ENCODE measurements at regions of chr14 and their contacts with region 1.

Region 1: GRCh38 chr14:23095196-23096108 is at the start of gene C14orf119:
- DNase-seq: peak; percentile 100
- ATAC-seq: peak; percentile 93
- H3K4me3 Mint-ChIP-seq: no peak within 1 kb of the TSS
- H3K27ac Mint-ChIP-seq: no peak within 1 kb of the TSS
- H3K4me1 Mint-ChIP-seq: peaks cover 19% of the 10 kb centered on the region
- H3K27me3 Mint-ChIP-seq: no peaks in the 10 kb centered on the region
- total RNA-seq, gene C14orf119: 43.8 to 51.5 TPM

Region 2: GRCh38 chr14:22589096-22589839 is 506.2 kb before region 1 on chr14 and contains the start of gene DAD1:
- CTCF ChIA-PET with region 1: no interaction called
- POLR2A ChIA-PET with region 1: interaction called, 10 read pairs
- intact Hi-C with region 1: loop called in 1 of 2 experiments (anchors 1 kb)
- DNase-seq: peak; percentile 100
- ATAC-seq: peak; percentile 84
- H3K4me3 Mint-ChIP-seq: peak within 1 kb of the TSS; percentile 93
- H3K27ac Mint-ChIP-seq: peak within 1 kb of the TSS; percentile 97
- H3K4me1 Mint-ChIP-seq: peaks cover 72% of the 10 kb centered on the region
- H3K27me3 Mint-ChIP-seq: peaks cover 1% of the 10 kb centered on the region
- total RNA-seq, gene DAD1: 265 to 302 TPM

Region 3: DNA sequence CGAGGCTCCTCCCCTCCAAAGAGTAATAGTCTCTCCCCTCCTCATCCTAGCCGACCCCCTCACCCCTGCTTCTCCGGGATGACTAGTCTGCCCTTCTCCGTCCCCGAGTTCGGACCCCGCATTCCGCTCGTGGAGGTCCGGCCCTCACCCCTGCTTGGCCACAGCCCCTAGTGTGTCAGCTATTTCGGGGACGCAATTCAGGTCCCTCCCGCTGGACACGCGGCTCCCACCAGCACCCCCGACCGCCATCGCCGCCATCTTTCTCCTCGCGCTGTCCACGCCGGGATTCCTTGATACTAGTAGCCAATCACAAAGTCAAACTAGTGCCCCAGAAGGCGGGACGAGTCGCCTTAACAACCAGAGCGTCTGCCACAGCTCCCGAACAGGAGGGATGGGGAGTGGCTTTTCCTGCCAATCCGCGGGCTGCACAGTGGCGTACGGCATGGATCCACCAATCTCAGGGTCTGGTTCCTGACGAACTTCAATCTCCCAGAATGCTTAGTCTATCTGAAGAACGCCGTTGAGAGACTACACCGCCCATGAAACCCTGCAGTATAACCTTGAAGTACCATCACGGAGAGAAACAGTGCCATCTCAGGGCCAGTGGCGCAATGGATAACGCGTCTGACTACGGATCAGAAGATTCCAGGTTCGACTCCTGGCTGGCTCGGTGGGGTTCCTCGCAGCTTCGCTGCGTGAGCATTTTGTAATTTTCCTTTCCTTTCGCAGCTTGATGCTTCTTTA is 166.2 kb before region 1 on chr14 and contains the start of gene PRMT5:
- CTCF ChIA-PET with region 1: interaction called, 14 read pairs
- POLR2A ChIA-PET with region 1: interaction called, 6 read pairs
- intact Hi-C with region 1: loop called in 1 of 2 experiments (anchors 1 kb)
- DNase-seq: peak; percentile 99
- ATAC-seq: peak; percentile 98
- H3K4me3 Mint-ChIP-seq: no peak within 1 kb of the TSS
- H3K27ac Mint-ChIP-seq: no peak within 1 kb of the TSS
- H3K4me1 Mint-ChIP-seq: peaks cover 39% of the 10 kb centered on the region
- H3K27me3 Mint-ChIP-seq: no peaks in the 10 kb centered on the region
- total RNA-seq, gene PRMT5: 121 to 151 TPM

Region 4: GRCh38 chr14:23034483-23035302 is 60.8 kb before region 1 on chr14 and contains the start of gene PSMB5:
- CTCF ChIA-PET with region 1: no interaction called
- POLR2A ChIA-PET with region 1: interaction called, 3 read pairs
- intact Hi-C with region 1: loop called (anchors 1 kb)
- DNase-seq: peak; percentile 94
- ATAC-seq: peak; percentile 95
- H3K4me3 Mint-ChIP-seq: peak within 1 kb of the TSS; percentile 97
- H3K27ac Mint-ChIP-seq: peak within 1 kb of the TSS; percentile 97
- H3K4me1 Mint-ChIP-seq: peaks cover 36% of the 10 kb centered on the region
- H3K27me3 Mint-ChIP-seq: no peaks in the 10 kb centered on the region
- total RNA-seq, gene PSMB5: 104 to 129 TPM

Region 5: DNA sequence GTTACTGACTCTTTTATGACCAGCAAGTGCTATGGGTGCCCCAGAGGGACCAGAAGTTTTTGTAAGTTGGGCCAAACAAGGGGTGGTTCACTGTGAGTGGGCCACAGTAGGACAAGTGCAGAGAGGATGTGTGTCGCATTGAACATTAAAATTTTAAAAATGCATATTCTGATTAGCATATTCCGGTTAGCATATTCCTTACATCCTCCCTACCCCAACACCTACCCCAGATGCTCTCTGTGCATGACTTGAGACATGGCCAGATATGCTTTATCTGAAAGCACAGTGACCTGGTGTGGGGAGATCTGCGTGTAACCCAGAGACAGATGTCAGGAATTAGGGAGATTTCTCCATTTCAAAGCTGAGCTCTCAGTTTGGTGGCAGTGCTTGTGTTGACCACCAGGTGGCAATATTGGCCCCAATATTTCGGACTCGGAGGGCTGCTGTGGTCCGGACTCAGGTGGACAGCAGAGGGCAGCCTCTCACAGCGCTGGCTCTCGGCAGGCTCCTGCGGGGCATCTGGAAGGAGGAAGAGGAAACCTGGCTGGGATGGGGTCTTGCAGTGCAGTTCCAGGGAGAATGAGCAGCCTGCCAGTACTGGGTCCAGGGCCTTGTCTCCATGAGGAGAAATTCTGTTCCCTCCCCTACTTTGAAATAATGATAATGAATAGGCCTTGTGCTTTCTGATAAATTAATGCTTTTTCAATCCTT is 25.2 kb after region 1 on chr14:
- CTCF ChIA-PET with region 1: interaction called, 32 read pairs
- POLR2A ChIA-PET with region 1: interaction called, 20 read pairs
- intact Hi-C with region 1: loop called in 1 of 2 experiments (anchors 1 kb)
- DNase-seq: peak; percentile 91
- ATAC-seq: peak; percentile 93
- H3K4me3 Mint-ChIP-seq: no peak overlapping the region
- H3K27ac Mint-ChIP-seq: peak overlapping the region; percentile 68
- H3K4me1 Mint-ChIP-seq: peaks cover 47% of the 10 kb centered on the region
- H3K27me3 Mint-ChIP-seq: no peaks in the 10 kb centered on the region

Region 6: DNA sequence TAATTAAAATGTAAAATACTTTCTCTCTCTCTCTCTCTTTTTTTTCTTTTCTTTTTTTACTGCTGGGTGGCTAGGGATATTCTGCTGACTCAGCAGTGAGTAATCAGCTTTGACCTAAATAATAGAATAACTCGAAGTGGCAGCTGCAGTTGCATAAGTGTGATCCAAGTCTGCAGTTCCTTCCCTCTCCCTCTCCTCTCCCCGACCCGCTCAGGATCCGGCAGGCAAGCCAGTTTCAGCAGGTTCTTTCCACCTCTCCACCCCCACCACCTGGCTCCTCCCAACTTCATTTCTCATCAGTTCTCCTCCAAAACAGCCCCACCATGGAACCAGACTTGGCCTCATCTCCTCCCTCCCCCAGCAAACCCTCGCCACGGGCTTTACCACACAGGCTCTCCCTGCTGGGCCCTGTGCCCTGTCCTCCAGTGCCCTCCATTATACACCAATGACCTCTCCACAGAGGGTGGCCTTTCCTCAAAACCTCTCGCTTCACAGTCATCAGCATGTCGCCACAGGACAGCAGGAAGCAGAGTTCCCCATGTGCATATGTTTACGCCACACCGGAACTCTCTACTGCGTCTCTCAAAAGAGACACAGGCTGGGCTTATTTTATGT is 65.6 kb after region 1 on chr14:
- CTCF ChIA-PET with region 1: no interaction called
- POLR2A ChIA-PET with region 1: no interaction called
- intact Hi-C with region 1: no loop called
- DNase-seq: no peak
- ATAC-seq: no peak
- H3K4me3 Mint-ChIP-seq: no peak overlapping the region
- H3K27ac Mint-ChIP-seq: no peak overlapping the region
- H3K4me1 Mint-ChIP-seq: peaks cover 7% of the 10 kb centered on the region
- H3K27me3 Mint-ChIP-seq: no peaks in the 10 kb centered on the region

Region 7: DNA sequence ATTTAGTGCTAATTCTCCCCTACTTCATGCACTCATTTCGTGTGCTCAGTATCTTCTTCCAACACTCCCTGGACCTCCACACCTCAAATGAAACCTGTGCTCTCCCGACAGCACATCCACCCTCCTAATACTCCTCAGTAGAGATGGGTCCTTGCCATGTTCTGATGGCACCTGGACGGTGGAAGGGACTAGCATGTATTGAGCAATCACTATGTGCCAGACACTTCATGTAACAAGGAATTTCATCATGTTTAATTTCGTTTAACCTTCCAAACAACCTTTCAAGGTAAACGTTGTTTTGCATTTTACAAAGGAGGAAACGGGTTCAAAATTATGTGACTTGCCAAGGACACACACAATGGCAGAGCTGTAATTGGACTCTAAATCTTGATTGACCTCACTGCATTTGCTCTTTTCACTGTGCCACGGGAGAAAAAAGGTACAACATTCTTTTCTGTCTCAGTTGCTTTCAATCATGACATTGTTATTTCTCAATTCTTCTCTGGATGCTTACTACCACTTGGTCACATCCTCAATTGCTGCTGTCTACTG is 100.2 kb after region 1 on chr14:
- CTCF ChIA-PET with region 1: no interaction called
- POLR2A ChIA-PET with region 1: no interaction called
- intact Hi-C with region 1: no loop called
- DNase-seq: no peak
- ATAC-seq: no peak
- H3K4me3 Mint-ChIP-seq: no peak overlapping the region
- H3K27ac Mint-ChIP-seq: no peak overlapping the region
- H3K4me1 Mint-ChIP-seq: no peaks in the 10 kb centered on the region
- H3K27me3 Mint-ChIP-seq: no peaks in the 10 kb centered on the region

Region 8: DNA sequence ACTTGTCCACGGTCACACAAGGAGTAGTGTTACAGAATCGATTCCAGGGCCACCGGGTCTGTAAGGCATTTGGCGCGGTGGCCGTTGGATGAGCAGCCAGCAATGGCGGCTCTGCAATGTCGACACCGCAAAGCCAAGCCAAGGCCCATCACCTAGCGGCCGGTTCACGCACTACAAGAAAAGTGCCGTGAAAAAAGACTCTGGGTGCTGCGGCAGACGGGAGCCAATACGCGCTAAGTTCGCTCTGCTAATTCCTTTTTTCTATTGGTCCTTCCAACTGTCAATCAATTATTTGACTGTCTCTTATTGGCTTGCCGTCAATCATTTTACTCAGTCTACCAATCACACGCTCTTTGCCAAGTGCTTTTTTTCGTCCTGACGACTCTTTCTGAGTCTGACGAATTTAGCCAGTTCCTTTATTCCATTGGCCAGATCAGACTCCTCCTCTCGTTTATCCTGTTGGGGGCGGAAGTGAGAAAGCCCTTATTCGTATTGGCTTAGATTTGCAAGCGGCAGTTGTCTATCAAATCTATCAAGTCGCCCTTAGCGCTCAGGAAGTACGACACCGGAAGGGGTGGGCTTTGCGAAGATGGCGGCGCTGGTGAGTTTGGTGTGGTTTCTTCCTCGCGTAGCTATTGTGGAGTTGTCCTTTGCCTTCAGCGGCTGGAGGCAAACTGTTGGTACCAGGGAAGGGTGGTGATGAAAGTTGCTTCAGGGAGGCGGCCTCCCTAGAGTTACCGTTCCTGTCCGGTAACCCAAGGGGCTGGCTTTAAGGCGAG is 373.9 kb after region 1 on chr14 and contains the start of gene NGDN:
- CTCF ChIA-PET with region 1: no interaction called
- POLR2A ChIA-PET with region 1: no interaction called
- intact Hi-C with region 1: loop called in 1 of 2 experiments (anchors 1 kb)
- DNase-seq: peak; percentile 95
- ATAC-seq: peak; percentile 97
- H3K4me3 Mint-ChIP-seq: no peak within 1 kb of the TSS
- H3K27ac Mint-ChIP-seq: no peak within 1 kb of the TSS
- H3K4me1 Mint-ChIP-seq: peaks cover 11% of the 10 kb centered on the region
- H3K27me3 Mint-ChIP-seq: no peaks in the 10 kb centered on the region
- total RNA-seq, gene NGDN: 53.0 to 57.8 TPM

Measured in activated CD4-positive, alpha-beta T cell treated with anti-CD3 and anti-CD28 coated beads for 36 hours (primary cell).